ENCODE measurements at regions of chr9 and their contacts with region 1.

Region 1: GRCh38 chr9:77960356-77961153 is 71.1 kb downstream of the GNAQ start:
- DNase-seq: no peak
- ATAC-seq: peak; percentile 15
- H3K4me3 ChIP-seq: no peak overlapping the region
- H3K27ac ChIP-seq: no peak overlapping the region
- H3K4me1 ChIP-seq: no peaks in the 10 kb centered on the region
- H3K27me3 ChIP-seq: peaks cover 0 to 3% of the 10 kb centered on the region in 2 experiments; a peak in 1 of 4 replicates
- CTCF ChIP-seq: no peak
- EP300 ChIP-seq: no peak
- POLR2A ChIP-seq: no peak
- RAD21 ChIP-seq: no peak

Region 2: DNA sequence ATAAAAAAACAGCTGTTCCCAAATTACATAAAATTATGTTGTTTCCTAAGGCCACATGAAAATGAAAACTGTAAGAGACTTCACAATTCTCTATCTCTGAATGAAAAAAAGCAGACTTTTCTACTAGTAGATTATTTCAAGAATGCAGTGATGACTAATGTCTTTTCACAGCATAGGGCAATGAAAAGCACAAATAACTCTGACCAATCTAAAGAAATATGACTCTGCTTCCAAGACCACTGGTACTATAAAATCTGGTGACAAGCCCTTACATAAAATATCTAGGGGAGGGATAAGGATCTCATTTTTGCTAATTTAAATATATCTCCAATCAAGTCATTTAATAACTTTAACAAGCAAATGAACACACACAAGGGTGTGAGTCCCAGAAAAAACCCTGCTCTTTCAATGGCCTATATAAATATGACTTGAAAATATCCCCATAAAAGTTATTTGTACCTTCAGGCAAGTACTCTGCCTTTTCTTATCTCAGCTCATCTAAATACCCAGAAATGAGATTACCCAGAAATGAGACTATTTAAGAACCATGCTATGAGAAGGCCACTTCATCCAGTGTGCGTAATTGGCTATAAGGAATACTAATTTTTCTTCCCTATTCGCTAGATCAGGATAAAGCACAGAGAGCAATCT is 34.1 kb before region 1 on chr9:
- CTCF ChIA-PET with region 1: no interaction called
- POLR2A ChIA-PET with region 1: no interaction called
- RAD21 ChIA-PET with region 1: interaction called, 3 read pairs
- SMC1A ChIA-PET with region 1: interaction called, 10 read pairs
- in situ Hi-C with region 1: no loop called
- intact Hi-C with region 1: no loop called
- DNase-seq: no peak
- ATAC-seq: peak; percentile 31; the same call in 1 of the 3 replicates
- H3K4me3 ChIP-seq: no peak overlapping the region
- H3K27ac ChIP-seq: no peak overlapping the region
- H3K4me1 ChIP-seq: no peaks in the 10 kb centered on the region
- H3K27me3 ChIP-seq: no peaks in the 10 kb centered on the region
- CTCF ChIP-seq: no peak
- EP300 ChIP-seq: no peak
- POLR2A ChIP-seq: no peak
- RAD21 ChIP-seq: no peak

Region 3: GRCh38 chr9:78167356-78167755 is 206.8 kb after region 1 on chr9:
- CTCF ChIA-PET with region 1: no interaction called
- POLR2A ChIA-PET with region 1: no interaction called
- RAD21 ChIA-PET with region 1: no interaction called
- SMC1A ChIA-PET with region 1: no interaction called
- in situ Hi-C with region 1: no loop called
- intact Hi-C with region 1: no loop called
- DNase-seq: no peak
- ATAC-seq: no peak
- H3K4me3 ChIP-seq: no peak overlapping the region
- H3K27ac ChIP-seq: no peak overlapping the region
- H3K4me1 ChIP-seq: no peaks in the 10 kb centered on the region
- H3K27me3 ChIP-seq: no peaks in the 10 kb centered on the region
- CTCF ChIP-seq: no peak
- EP300 ChIP-seq: no peak
- POLR2A ChIP-seq: no peak
- RAD21 ChIP-seq: no peak